Activated CD8-positive, alpha-beta memory T cell treated with anti-CD3 and anti-CD28 coated beads, Interleukin-2, amount 10 ng/mL, durations not matched to agents 7 days and 5 days (primary cell): ENCODE measurements at regions of chr13 and their contacts with region 1.

Region 1: GRCh38 chr13:99200432-99201167 is at the start of gene UBAC2:
- DNase-seq: peak; percentile 97
- ATAC-seq: peak; percentile 86
- H3K4me3 Mint-ChIP-seq: peak within 1 kb of the TSS; percentile 91
- H3K27ac Mint-ChIP-seq: peak within 1 kb of the TSS; percentile 92
- H3K4me1 Mint-ChIP-seq: peaks cover 54% of the 10 kb centered on the region
- H3K27me3 Mint-ChIP-seq: no peaks in the 10 kb centered on the region
- total RNA-seq, gene UBAC2: 52.8 to 60.8 TPM

Region 2: DNA sequence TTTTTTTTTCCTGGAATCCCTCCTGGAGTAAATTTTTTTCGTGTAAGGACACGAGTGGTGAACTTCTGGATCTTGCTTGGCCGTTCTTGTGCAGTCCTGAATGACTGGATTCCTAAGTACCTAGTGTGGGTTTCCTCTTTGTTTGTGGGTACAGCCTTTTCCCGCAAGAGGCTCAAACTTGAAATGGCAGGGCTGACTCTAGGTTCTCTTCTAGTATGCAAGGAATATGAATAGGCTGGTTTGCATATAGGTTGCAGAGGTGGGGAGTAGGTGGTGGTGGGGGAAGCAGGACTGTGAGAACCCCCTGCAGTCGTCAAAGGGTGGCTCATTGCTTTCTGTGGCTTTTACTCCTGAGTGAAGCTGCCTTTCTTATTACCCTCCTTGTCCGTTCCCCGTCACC is 13.6 kb after region 1 on chr13:
- CTCF ChIA-PET with region 1: interaction called, 106 read pairs
- DNase-seq: peak; percentile 62
- ATAC-seq: peak; percentile 23
- H3K4me3 Mint-ChIP-seq: peak overlapping the region; percentile 73
- H3K27ac Mint-ChIP-seq: peak overlapping the region; percentile 94
- H3K4me1 Mint-ChIP-seq: peaks cover 72% of the 10 kb centered on the region
- H3K27me3 Mint-ChIP-seq: no peaks in the 10 kb centered on the region

Region 3: GRCh38 chr13:99228737-99229691 is 28.4 kb after region 1 on chr13:
- CTCF ChIA-PET with region 1: interaction called, 18 read pairs
- DNase-seq: no peak
- ATAC-seq: peak; percentile 34
- H3K4me3 Mint-ChIP-seq: peak overlapping the region; percentile 71
- H3K27ac Mint-ChIP-seq: peak overlapping the region; percentile 91
- H3K4me1 Mint-ChIP-seq: peaks cover 74% of the 10 kb centered on the region
- H3K27me3 Mint-ChIP-seq: no peaks in the 10 kb centered on the region